ENCODE measurements at regions of chrX and their contacts with region 1.

Region 1: GRCh38 chrX:78945186-78945912 is at the start of gene P2RY10:
- DNase-seq: peak; percentile 78
- ATAC-seq: peak; percentile 80
- H3K4me3 ChIP-seq: peak within 1 kb of the TSS; percentile 69 to 98 (median 83)
- H3K4me3 Mint-ChIP-seq: peak within 1 kb of the TSS; percentile 99
- H3K27ac ChIP-seq: peak within 1 kb of the TSS; percentile 87 to 94
- H3K27ac Mint-ChIP-seq: peak within 1 kb of the TSS; percentile 97
- H3K4me1 ChIP-seq: peaks cover 37% of the 10 kb centered on the region in 2 donors
- H3K4me1 Mint-ChIP-seq: peaks cover 50% of the 10 kb centered on the region
- H3K27me3 ChIP-seq: no peaks in the 10 kb centered on the region
- H3K27me3 Mint-ChIP-seq: no peaks in the 10 kb centered on the region
- CTCF ChIP-seq: no peak
- total RNA-seq, gene P2RY10: 169 and 177 TPM in 2 replicates

Region 2: DNA sequence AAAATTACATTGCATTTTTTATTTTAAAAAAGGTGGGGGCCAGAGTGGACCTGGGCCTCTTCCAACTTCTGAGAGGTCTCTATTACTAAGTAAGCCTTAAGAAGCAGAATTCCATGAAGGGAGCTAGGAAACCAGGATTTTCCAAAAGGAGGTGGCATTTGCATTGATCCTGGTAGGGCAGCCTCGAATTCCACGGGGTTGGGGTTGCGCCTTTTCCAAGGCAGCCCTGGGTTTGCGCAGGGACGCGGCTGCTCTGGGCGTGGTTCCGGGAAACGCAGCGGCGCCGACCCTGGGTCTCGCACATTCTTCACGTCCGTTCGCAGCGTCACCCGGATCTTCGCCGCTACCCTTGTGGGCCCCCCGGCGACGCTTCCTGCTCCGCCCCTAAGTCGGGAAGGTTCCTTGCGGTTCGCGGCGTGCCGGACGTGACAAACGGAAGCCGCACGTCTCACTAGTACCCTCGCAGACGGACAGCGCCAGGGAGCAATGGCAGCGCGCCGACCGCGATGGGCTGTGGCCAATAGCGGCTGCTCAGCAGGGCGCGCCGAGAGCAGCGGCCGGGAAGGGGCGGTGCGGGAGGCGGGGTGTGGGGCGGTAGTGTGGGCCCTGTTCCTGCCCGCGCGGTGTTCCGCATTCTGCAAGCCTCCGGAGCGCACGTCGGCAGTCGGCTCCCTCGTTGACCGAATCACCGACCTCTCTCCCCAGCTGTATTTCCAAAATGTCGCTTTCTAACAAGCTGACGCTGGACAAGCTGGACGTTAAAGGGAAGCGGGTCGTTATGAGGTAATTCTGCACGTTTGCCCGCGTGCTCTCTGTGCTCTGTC is 841.5 kb before region 1 on chrX and contains the start of gene PGK1:
- CTCF ChIA-PET with region 1: no interaction called
- POLR2A ChIA-PET with region 1: no interaction called
- intact Hi-C with region 1: loop called (anchors 5 kb)
- DNase-seq: peak; percentile 94
- ATAC-seq: peak; percentile 97
- H3K4me3 ChIP-seq: peak within 1 kb of the TSS; percentile 43 to 90 (median 76)
- H3K4me3 Mint-ChIP-seq: peak within 1 kb of the TSS; percentile 97
- H3K27ac ChIP-seq: peak within 1 kb of the TSS; percentile 87 to 89
- H3K27ac Mint-ChIP-seq: peak within 1 kb of the TSS; percentile 97
- H3K4me1 ChIP-seq: peaks cover 30 to 44% of the 10 kb centered on the region in 2 donors
- H3K4me1 Mint-ChIP-seq: peaks cover 41% of the 10 kb centered on the region
- H3K27me3 ChIP-seq: no peaks in the 10 kb centered on the region
- H3K27me3 Mint-ChIP-seq: no peaks in the 10 kb centered on the region
- CTCF ChIP-seq: no peak
- total RNA-seq, gene PGK1: 153 and 162 TPM in 2 replicates

Region 3: DNA sequence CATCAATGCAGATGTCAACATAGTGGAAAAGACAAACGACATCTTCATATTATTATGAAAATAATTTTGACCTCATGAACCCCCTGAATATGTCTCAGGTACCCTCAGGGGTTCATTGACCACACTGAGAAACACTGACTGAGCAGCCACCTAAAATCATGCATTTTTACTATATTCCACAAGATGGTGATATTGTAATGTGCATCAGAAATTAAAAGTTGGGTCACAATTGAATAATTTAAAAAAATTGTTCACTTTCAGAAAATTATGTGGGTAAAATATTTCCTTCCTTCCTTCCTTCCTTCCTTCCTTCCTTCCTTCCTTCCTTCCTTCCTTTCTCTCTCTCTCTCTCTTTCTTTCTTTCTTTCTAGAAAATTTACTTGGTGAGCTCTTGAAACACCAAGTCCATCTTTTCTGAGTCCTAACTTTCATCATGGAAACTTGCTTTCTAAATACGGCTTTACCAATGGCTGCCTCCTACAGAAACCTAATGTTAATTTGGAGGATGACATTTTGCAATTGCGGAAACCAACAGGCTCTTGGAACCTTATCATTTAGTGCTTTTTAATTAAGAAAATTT is 389.9 kb before region 1 on chrX:
- CTCF ChIA-PET with region 1: interaction called, 11 read pairs
- POLR2A ChIA-PET with region 1: no interaction called
- intact Hi-C with region 1: loop called (anchors 5 kb)
- DNase-seq: peak; percentile 44
- ATAC-seq: no peak
- H3K4me3 ChIP-seq: no peak overlapping the region
- H3K4me3 Mint-ChIP-seq: no peak overlapping the region
- H3K27ac ChIP-seq: no peak overlapping the region
- H3K27ac Mint-ChIP-seq: no peak overlapping the region
- H3K4me1 ChIP-seq: no peaks in the 10 kb centered on the region
- H3K4me1 Mint-ChIP-seq: peaks cover 17% of the 10 kb centered on the region
- H3K27me3 ChIP-seq: no peaks in the 10 kb centered on the region
- H3K27me3 Mint-ChIP-seq: no peaks in the 10 kb centered on the region
- CTCF ChIP-seq: peak; percentile 58

Region 4: GRCh38 chrX:78886550-78886949 is 58.8 kb before region 1 on chrX:
- CTCF ChIA-PET with region 1: no interaction called
- POLR2A ChIA-PET with region 1: no interaction called
- intact Hi-C with region 1: loop called (anchors 5 kb)
- DNase-seq: peak; percentile 36
- ATAC-seq: peak; percentile 72
- H3K4me3 ChIP-seq: no peak overlapping the region
- H3K4me3 Mint-ChIP-seq: no peak overlapping the region
- H3K27ac ChIP-seq: no peak overlapping the region
- H3K27ac Mint-ChIP-seq: no peak overlapping the region
- H3K4me1 ChIP-seq: no peaks in the 10 kb centered on the region
- H3K4me1 Mint-ChIP-seq: peaks cover 11% of the 10 kb centered on the region
- H3K27me3 ChIP-seq: no peaks in the 10 kb centered on the region
- H3K27me3 Mint-ChIP-seq: no peaks in the 10 kb centered on the region
- CTCF ChIP-seq: peak; percentile 49

Region 5: DNA sequence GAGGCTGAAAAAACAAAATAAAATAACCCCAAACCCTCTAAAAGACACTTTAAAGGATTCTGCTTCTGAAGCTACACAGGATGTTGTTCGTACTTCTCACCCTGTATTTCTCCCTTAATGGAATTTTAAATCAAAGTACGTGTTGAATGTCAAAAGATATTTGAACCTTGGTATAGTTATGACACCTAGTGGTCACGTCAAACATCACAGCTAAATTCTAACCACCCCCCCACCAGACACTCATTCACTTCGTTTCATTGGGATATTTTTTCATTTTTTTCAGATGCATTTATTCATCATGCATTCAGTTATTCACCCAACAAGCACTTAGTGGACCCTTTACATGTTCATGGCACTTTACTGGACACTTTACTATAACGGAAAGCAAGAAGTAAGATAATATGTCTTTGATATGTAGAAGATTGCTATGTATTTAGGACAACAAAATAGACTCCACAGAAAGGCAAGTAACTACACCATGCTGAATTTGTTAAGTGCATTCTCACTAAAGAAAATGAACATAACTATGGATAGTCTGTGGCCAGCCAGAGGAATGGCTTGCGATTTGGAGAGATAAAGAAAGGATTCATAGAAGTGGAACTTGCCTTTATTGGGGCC is 136.7 kb after region 1 on chrX:
- CTCF ChIA-PET with region 1: interaction called, 3 read pairs
- POLR2A ChIA-PET with region 1: no interaction called
- intact Hi-C with region 1: loop called (anchors 2 kb)
- DNase-seq: peak; percentile 69
- ATAC-seq: peak; percentile 78
- H3K4me3 ChIP-seq: peak overlapping the region in 2 of 5 experiments; percentile 12 to 26
- H3K4me3 Mint-ChIP-seq: peak overlapping the region; percentile 55
- H3K27ac ChIP-seq: peak overlapping the region in 1 of 2 donors; percentile 32
- H3K27ac Mint-ChIP-seq: peak overlapping the region; percentile 51
- H3K4me1 ChIP-seq: peaks cover 4 to 9% of the 10 kb centered on the region in 2 donors
- H3K4me1 Mint-ChIP-seq: peaks cover 10% of the 10 kb centered on the region
- H3K27me3 ChIP-seq: no peaks in the 10 kb centered on the region
- H3K27me3 Mint-ChIP-seq: no peaks in the 10 kb centered on the region
- CTCF ChIP-seq: peak; percentile 70

Region 6: GRCh38 chrX:80808160-80808735 is 1862.9 kb after region 1 on chrX:
- CTCF ChIA-PET with region 1: no interaction called
- POLR2A ChIA-PET with region 1: no interaction called
- intact Hi-C with region 1: loop called (anchors 10 kb)
- DNase-seq: peak; percentile 89
- ATAC-seq: peak; percentile 55
- H3K4me3 ChIP-seq: peak overlapping the region; percentile 75 to 89 (median 84)
- H3K4me3 Mint-ChIP-seq: peak overlapping the region; percentile 96
- H3K27ac ChIP-seq: peak overlapping the region; percentile 76 to 82
- H3K27ac Mint-ChIP-seq: peak overlapping the region; percentile 95
- H3K4me1 ChIP-seq: peaks cover 5 to 15% of the 10 kb centered on the region in 2 donors
- H3K4me1 Mint-ChIP-seq: peaks cover 25% of the 10 kb centered on the region
- H3K27me3 ChIP-seq: no peaks in the 10 kb centered on the region
- H3K27me3 Mint-ChIP-seq: no peaks in the 10 kb centered on the region
- CTCF ChIP-seq: no peak

Measured in B cell (primary cell).